ENCODE measurements at regions of chr6 and their contacts with region 1.

Region 1: DNA sequence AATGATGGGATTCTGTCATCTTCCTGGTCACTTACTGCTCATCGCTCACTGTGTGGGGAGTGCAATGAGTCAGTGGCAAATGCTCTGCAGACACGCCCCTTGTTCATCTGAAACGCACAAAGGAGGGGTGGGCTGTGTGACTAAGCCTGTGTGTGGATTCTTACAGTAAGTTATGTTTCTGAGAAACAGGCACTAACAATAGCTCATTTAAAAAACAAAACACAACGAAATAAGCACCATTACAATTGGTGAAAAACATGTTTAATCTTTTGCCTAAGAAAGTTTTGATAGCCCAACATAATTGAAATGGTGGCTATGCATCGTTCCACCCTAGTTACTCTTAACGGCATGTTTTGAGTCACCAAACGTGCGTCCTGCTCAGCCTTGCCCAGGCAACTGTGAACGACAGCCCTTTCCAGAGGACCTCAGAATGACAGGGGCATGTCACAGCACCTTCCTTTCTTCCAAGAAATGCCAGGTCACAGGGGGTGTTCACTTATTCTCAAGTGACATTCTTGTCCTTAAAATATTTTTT is 118.4 kb upstream of the SGK1 start:
- DNase-seq: peak in 3 of 5 donors; percentile 6 to 77 (median 14)
- H3K4me3 ChIP-seq: peak overlapping the region; percentile 5 to 37
- H3K4me3 Mint-ChIP-seq: peak overlapping the region; percentile 76 to 91 (median 83)
- H3K27ac ChIP-seq: no peak overlapping the region
- H3K27ac Mint-ChIP-seq: peak overlapping the region; percentile 13 to 88 (median 51)
- H3K4me1 ChIP-seq: peaks cover 23% of the 10 kb centered on the region
- H3K4me1 Mint-ChIP-seq: peaks cover 18 to 20% (median 19%) of the 10 kb centered on the region in 4 donors
- H3K27me3 ChIP-seq: no peaks in the 10 kb centered on the region
- H3K27me3 Mint-ChIP-seq: no peaks in the 10 kb centered on the region

Region 2: DNA sequence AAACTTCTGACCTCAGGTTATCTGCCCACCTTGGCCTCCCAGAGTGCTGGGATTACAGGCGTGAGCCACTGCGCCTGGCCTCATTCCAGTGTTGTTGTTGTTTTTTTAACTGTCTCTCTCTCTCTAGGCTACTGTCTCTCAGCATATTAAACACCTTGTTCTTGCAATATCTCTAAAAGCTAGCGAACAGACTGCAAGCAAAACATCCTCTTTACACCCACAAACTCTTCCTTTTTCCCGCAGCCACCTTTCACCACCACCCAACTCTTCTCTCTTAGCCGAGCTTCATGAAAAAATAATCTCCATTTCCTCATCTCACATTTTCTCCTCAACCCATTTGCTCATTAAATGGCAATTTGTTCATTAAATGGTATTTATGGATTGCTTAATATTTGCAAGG is 164.0 kb before region 1 on chr6:
- CTCF ChIA-PET with region 1: no interaction called
- POLR2A ChIA-PET with region 1: no interaction called
- intact Hi-C with region 1: loop called (anchors 10 kb)
- DNase-seq: peak in 1 of 5 donors; percentile 14
- H3K4me3 ChIP-seq: no peak overlapping the region
- H3K4me3 Mint-ChIP-seq: peak overlapping the region; percentile 38 to 76 (median 64)
- H3K27ac ChIP-seq: no peak overlapping the region
- H3K27ac Mint-ChIP-seq: peak overlapping the region in 6 of 7 donors; percentile 19 to 86 (median 72)
- H3K4me1 ChIP-seq: peaks cover 33% of the 10 kb centered on the region
- H3K4me1 Mint-ChIP-seq: peaks cover 25 to 41% (median 35%) of the 10 kb centered on the region in 4 donors
- H3K27me3 ChIP-seq: no peaks in the 10 kb centered on the region
- H3K27me3 Mint-ChIP-seq: no peaks in the 10 kb centered on the region

Measured in CD4-positive, alpha-beta memory T cell (primary cell).